Right lobe of liver (tissue), 6 donors: ENCODE measurements at regions of chr12 and their contacts with region 1.

Region 1: GRCh38 chr12:6039894-6040568 is 84.4 kb downstream of the VWF start:
- DNase-seq: peak in 1 of 3 donors; percentile 47
- ATAC-seq: peak; percentile 84 to 89 (median 86)
- H3K4me3 ChIP-seq: no peak overlapping the region
- H3K27ac ChIP-seq: no peak overlapping the region
- H3K4me1 ChIP-seq: peaks cover 0 to 6% (median 0%) of the 10 kb centered on the region in 4 donors
- H3K27me3 ChIP-seq: no peaks in the 10 kb centered on the region
- CTCF ChIP-seq: peak; percentile 83 to 87 (median 86)
- POLR2A ChIP-seq: no peak

Region 2: DNA sequence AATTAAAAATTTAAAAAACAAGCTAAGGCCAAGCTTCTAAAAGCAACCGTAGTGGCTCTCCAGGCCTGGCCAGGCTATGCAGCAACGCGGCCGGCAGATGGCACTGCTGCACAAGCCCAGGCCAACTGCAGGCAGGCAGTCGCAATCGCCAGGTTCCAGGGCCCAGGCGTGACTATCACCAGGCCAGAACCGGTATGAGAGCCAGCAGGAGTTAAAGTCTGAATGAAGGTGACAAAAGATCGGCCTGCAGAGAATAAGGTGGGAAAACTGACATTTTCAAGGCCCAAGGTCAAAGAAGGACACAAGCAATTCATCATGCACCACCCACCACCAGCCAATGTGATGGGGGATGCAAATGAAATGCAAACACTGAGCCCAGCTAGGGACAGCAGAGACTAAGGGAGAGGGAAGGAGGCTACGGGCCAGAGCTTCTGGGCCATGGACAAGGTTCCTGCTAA is 51.3 kb before region 1 on chr12:
- intact Hi-C with region 1: loop called (anchors 5 to 10 kb)
- DNase-seq: peak; percentile 84 to 87 (median 85)
- ATAC-seq: peak; percentile 98 to 100 (median 98)
- H3K4me3 ChIP-seq: no peak overlapping the region
- H3K27ac ChIP-seq: no peak overlapping the region
- H3K4me1 ChIP-seq: peaks cover 0 to 13% (median 2%) of the 10 kb centered on the region in 4 donors
- H3K27me3 ChIP-seq: no peaks in the 10 kb centered on the region
- CTCF ChIP-seq: peak; percentile 94 to 99 (median 98)
- POLR2A ChIP-seq: no peak